Tibial artery (tissue), 4 donors: ENCODE measurements at regions of chr14 and their contacts with region 1.

Region 1: GRCh38 chr14:103333754-103334643 is at the start of gene EIF5:
- DNase-seq: peak; percentile 98 to 100
- H3K4me3 ChIP-seq: peak within 1 kb of the TSS; percentile 65 to 99
- H3K27ac ChIP-seq: peak within 1 kb of the TSS; percentile 97 to 100
- H3K4me1 ChIP-seq: peaks cover 0 to 30% (median 17%) of the 10 kb centered on the region in 4 donors
- H3K27me3 ChIP-seq: no peaks in the 10 kb centered on the region
- CTCF ChIP-seq: peak; percentile 47 to 72

Region 2: GRCh38 chr14:102591889-102592763 is 741.9 kb before region 1 on chr14 and contains the start of gene RCOR1:
- intact Hi-C with region 1: loop called (anchors 10 kb)
- DNase-seq: peak; percentile 96 to 99
- H3K4me3 ChIP-seq: peak within 1 kb of the TSS; percentile 83 to 88
- H3K27ac ChIP-seq: peak within 1 kb of the TSS; percentile 93
- H3K4me1 ChIP-seq: peaks cover 0 to 35% (median 21%) of the 10 kb centered on the region in 4 donors
- H3K27me3 ChIP-seq: no peaks in the 10 kb centered on the region
- CTCF ChIP-seq: peak in 1 of 2 experiments; percentile 13

Region 3: DNA sequence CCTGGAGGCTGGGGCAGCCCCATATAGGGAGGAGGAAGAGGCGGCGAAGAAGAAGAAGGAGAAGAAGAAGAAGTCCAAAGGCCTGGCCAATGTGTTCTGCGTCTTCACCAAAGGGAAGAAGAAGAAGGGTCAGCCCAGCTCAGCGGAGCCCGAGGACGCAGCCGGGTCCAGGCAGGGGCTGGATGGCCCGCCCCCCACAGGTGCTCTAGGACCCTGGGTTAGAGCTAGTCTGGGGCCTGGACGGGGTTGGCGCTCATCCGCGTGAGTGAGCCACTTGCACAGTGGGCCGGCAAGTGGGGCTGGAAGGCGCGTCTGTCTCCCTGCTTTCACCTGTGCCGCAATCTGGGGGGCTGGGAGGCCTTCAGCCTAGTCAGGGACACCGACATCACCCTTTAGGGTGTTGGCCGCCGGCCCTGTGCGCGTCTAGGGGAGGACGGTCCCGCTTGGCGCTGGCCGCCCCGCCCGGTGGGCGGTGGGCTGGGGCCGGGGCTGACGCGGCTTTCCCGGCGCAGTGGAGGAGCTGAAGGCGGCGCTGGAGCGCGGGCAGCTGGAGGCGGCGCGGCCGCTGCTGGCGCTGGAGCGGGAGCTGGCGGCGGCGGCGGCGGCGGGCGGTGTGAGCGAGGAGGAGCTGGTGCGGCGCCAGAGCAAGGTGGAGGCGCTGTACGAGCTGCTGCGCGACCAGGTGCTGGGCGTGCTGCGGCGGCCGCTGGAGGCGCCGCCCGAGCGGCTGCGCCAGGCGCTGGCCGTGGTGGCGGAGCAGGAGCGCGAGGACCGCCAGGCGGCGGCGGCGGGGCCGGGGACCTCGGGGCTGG is 207.3 kb before region 1 on chr14:
- intact Hi-C with region 1: no loop called
- DNase-seq: no peak
- H3K4me3 ChIP-seq: peak overlapping the region; percentile 22 to 47
- H3K27ac ChIP-seq: no peak overlapping the region
- H3K4me1 ChIP-seq: peaks cover 0 to 88% (median 37%) of the 10 kb centered on the region in 4 donors
- H3K27me3 ChIP-seq: peaks cover 0 to 88% of the 10 kb centered on the region in 2 donors
- CTCF ChIP-seq: peak in 1 of 2 experiments; percentile 30

Region 4: DNA sequence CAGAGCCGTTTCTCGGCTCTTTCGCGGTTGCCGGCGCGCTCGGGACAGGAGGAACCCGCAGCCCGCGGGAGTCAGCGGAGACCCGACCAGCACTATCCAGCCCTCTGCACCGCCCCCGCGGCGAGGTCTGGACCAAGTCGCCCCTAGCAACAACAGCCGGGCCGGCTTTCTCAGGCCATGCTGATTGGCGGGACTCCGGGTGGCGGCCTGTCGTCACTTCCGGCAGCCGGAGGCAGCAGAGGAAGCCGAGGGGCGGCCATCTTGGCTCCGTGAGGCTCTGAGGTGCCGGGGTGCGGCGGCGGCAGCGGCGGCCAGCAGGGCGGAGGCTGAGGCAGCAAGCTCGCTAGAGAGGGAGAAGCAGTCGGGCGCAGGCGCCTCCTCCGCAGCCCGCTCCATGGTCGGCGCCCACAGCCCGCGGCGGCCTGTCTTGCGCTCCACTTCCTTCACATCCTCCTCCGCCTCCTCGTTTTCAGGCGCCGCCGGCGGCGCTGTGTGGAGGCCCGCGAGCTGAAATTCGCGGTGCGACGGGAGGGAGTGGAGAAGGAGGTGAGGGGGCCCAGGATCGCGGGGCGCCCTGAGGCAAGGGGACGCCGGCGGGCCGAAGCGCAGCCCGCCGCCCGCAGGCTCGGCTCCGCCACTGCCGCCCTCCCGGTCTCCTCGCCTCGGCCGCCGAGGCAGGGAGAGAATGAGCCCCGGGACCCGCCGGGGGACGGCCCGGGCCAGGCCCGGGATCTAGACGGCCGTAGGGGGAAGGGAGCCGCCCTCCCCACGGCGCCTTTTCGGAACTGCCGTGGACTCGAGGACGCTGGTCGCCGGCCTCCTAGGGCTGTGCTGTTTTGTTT is 51.4 kb after region 1 on chr14 and contains the start of gene MARK3:
- intact Hi-C with region 1: loop called (anchors 2 kb)
- DNase-seq: peak; percentile 98
- H3K4me3 ChIP-seq: peak within 1 kb of the TSS; percentile 77 to 84
- H3K27ac ChIP-seq: peak within 1 kb of the TSS; percentile 93 to 97
- H3K4me1 ChIP-seq: peaks cover 0 to 33% (median 28%) of the 10 kb centered on the region in 4 donors
- H3K27me3 ChIP-seq: no peaks in the 10 kb centered on the region
- CTCF ChIP-seq: peak; percentile 16 to 25